Activated naive CD4-positive, alpha-beta T cell treated with anti-CD3 and anti-CD28 coated beads, Interleukin-2, amount 10 ng/mL, durations not matched to agents 7 days and 5 days (primary cell): ENCODE measurements at regions of chr12 and their contacts with region 1.

Region 1: GRCh38 chr12:89019408-89020120 is 332.7 kb downstream of the DUSP6 start:
- DNase-seq: peak; percentile 86
- H3K4me3 Mint-ChIP-seq: no peak overlapping the region
- H3K27ac Mint-ChIP-seq: no peak overlapping the region
- H3K4me1 Mint-ChIP-seq: peaks cover 29% of the 10 kb centered on the region
- H3K27me3 Mint-ChIP-seq: peaks cover 4% of the 10 kb centered on the region

Region 2: GRCh38 chr12:89040146-89040964 is 20.8 kb after region 1 on chr12:
- CTCF ChIA-PET with region 1: interaction called, 58 read pairs
- DNase-seq: peak; percentile 92
- H3K4me3 Mint-ChIP-seq: peak overlapping the region; percentile 10
- H3K27ac Mint-ChIP-seq: peak overlapping the region; percentile 91
- H3K4me1 Mint-ChIP-seq: peaks cover 59% of the 10 kb centered on the region
- H3K27me3 Mint-ChIP-seq: peaks cover 4% of the 10 kb centered on the region

Region 3: GRCh38 chr12:89244536-89244935 is 225.0 kb after region 1 on chr12:
- CTCF ChIA-PET with region 1: interaction called, 13 read pairs
- DNase-seq: peak; percentile 37
- H3K4me3 Mint-ChIP-seq: peak overlapping the region; percentile 46
- H3K27ac Mint-ChIP-seq: peak overlapping the region; percentile 91
- H3K4me1 Mint-ChIP-seq: peaks cover 59% of the 10 kb centered on the region
- H3K27me3 Mint-ChIP-seq: no peaks in the 10 kb centered on the region

Region 4: DNA sequence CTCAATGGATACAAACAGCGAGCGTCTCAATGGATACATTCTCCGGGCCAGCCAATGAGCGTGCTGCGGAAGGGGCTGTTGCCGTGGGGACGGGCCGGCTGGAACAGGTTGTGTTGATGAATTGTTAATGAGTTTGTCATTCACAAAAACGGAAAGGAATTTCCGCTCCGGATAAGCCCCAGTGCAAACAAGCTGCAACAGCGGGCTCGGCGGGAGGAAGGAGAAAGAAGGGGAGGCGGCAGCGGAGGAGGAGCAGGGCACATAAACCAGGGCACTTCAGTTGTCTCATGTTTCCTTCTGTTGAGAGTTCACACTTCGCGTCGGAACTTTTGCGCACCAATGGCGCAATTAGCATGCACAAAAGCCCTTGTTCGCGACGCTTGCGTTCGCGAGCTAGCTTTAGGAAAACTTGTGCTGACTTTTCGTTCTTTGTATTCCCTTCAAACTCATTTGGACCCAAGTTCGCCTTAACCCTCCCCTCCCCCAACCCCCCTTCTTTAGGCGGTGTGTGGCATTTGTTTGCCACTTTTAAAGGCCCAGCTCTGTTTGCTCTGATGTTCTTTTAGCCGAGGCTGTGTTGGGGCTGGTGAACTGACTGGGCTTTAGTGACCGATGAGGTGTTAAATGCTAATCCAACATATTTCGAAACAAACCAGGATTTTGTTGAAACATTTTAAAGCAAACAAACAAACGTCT is 333.1 kb after region 1 on chr12 and contains the start of gene DUSP6:
- CTCF ChIA-PET with region 1: interaction called, 16 read pairs
- DNase-seq: peak; percentile 98
- H3K4me3 Mint-ChIP-seq: peak within 1 kb of the TSS; percentile 99
- H3K27ac Mint-ChIP-seq: peak within 1 kb of the TSS; percentile 97
- H3K4me1 Mint-ChIP-seq: peaks cover 56% of the 10 kb centered on the region
- H3K27me3 Mint-ChIP-seq: peaks cover 7% of the 10 kb centered on the region

Region 5: GRCh38 chr12:89470741-89471509 is 451.4 kb after region 1 on chr12:
- CTCF ChIA-PET with region 1: interaction called, 26 read pairs
- DNase-seq: no peak
- H3K4me3 Mint-ChIP-seq: no peak overlapping the region
- H3K27ac Mint-ChIP-seq: peak overlapping the region; percentile 50
- H3K4me1 Mint-ChIP-seq: peaks cover 79% of the 10 kb centered on the region
- H3K27me3 Mint-ChIP-seq: no peaks in the 10 kb centered on the region